ENCODE measurements at regions of chr1 and their contacts with region 1.

Region 1: DNA sequence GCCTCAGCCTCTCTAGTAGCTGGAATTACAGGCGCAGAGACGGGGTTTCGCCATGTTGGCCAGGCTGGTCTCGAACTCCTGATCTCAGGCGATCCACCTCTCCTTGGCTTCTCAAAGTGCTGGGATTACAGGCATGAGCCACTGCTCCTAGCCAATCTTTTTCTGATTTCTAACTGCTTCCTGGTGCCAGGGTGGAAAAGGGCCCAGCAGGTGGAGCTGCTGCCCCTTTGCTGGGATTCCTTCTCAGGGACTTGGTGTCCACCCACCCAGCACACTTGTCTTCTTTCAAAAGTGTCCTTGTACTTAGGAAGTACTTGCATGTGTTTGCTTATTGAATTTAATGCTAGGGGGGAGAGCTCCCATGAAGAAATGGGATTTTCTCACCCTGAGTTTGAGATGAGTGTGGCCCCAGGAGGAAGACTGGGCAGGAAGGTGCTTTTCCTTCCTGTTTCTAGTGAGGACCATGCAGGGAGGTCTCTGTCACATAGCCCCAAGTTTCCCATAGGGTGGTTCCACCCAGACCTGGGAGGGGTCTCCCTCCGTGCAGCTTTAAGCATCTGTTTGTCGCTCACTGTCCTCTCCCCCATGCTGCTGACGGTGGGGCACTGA is 14.2 kb downstream of the UTP11 start:
- DNase-seq: peak; percentile 61
- CTCF ChIP-seq: peak; percentile 71

Region 2: DNA sequence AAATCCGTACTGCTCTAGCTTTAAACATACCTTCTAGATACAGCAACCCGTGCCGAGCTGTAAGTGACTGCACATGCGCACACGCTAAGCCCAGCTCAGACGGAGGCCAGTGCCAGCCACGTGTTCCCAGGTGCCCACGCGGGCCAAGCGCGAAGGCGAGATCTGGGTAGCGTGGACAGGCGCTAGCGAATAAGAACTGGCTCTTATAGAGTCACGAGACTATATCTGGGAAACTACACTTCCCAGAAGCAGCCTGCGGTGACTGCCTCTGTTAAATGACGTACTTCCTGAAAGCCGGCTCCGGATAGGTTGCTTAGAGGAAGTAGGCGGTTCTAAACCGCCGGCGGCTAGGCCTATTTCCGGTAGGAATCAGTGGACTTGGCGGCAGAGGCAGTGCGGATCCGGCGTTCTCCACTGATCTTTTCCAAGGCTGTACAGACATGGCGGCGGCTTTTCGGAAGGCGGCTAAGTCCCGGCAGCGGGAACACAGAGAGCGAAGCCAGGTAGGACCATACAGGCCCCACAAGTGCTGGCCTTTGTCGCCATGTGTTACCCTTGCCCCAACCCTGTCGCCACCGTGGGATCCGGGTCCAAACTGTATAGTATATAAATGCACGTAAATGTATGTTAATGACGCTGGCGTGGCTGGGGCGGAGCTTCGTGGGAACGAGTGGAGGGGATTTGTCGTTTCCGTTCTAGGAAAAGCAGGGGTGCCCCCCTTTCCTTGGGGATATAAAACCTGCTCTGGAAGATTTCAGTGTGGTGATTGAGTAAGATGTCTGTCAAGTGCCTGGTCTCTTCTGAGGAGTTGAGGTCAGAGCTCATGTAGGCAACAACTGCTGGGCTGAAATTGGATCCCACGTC is 14.1 kb before region 1 on chr1 and contains the start of gene UTP11:
- CTCF ChIA-PET with region 1: interaction called, 58 read pairs
- POLR2A ChIA-PET with region 1: interaction called, 7 read pairs
- DNase-seq: peak; percentile 95
- CTCF ChIP-seq: no peak

Region 3: GRCh38 chr1:38037221-38037939 is 10.7 kb after region 1 on chr1:
- CTCF ChIA-PET with region 1: interaction called, 27 read pairs
- POLR2A ChIA-PET with region 1: no interaction called
- DNase-seq: no peak
- CTCF ChIP-seq: peak; percentile 29

Region 4: DNA sequence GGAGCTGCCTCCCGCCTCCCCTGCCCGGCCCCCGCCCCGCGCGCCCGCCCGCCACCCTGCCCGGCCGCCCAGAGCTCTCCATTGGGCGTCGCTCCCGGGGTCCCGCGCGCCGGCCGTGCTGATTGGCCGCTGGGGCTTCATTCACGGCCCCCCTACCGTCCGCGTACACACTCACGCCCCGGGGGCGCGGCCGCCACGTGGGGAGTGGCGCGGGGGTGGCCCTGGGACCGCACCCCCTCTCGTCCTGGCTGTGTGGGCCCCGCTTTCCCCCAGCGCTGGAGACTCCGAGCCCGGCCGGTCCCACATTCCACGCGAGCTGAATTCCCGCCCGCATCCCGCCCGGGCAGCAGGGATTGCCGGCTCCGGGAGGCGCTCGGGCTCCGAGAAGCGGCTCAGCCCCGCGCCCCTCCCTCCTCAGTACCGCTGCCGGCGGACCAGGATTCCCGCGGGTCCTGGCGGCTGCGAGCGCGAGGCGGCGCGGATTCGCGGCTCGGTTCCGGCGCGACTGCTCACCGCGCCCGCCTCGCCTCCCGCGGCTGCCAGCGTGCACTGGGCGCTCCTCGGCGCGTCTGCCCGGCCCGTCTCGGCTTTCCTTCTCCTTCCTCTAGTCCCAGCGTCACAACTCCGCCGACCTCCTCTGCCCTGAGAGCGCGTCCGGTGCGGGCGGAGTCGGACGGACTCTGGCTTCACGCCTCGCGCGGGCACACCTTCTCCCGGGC is 20.3 kb after region 1 on chr1:
- CTCF ChIA-PET with region 1: interaction called, 27 read pairs
- POLR2A ChIA-PET with region 1: interaction called, 5 read pairs
- DNase-seq: peak; percentile 89
- CTCF ChIP-seq: no peak

Region 5: GRCh38 chr1:38071312-38072256 is 44.9 kb after region 1 on chr1:
- CTCF ChIA-PET with region 1: interaction called, 35 read pairs
- POLR2A ChIA-PET with region 1: no interaction called
- DNase-seq: peak; percentile 66
- CTCF ChIP-seq: peak; percentile 40

Region 6: DNA sequence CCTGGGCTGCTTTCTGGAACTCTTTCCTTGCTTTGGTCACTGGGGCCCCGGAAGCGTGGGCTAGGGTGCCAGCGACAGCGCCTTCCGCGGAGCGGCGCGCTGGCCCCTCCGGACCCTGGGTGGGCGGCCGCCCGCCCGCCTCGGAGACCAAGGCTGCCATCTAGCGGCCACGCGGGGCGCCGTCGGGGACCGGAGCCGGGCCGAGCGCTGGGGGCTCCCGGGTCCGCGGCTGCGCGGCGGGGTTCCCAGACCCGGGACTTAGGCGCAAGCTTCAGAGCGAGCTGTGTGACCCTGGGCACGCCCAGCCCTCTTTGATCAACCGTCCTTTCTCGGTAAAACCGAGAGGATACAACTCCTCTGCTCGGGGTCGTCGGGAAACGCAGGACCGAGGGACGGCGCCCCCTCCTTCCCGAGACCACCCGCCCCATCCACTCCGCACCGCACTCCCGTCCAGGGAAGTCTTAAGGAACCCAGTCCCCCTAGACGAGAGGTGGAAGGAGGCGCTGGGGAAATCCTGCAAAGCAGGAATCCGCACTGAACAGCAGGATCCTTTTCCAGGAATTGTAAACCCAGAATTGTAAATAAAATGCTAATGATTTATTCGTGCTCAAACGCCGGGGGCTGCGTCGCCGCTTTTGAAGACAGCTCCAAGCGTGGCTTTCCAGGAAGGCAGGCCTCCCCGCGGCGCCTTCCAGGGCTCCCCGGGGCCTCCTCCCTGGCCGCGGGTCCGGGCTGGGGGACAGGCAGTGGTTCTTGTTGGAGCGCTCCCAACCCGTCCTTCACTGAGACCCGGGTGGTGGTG is 791.7 kb after region 1 on chr1:
- CTCF ChIA-PET with region 1: interaction called, 13 read pairs
- POLR2A ChIA-PET with region 1: no interaction called
- DNase-seq: peak; percentile 79
- CTCF ChIP-seq: peak; percentile 84

Region 7: DNA sequence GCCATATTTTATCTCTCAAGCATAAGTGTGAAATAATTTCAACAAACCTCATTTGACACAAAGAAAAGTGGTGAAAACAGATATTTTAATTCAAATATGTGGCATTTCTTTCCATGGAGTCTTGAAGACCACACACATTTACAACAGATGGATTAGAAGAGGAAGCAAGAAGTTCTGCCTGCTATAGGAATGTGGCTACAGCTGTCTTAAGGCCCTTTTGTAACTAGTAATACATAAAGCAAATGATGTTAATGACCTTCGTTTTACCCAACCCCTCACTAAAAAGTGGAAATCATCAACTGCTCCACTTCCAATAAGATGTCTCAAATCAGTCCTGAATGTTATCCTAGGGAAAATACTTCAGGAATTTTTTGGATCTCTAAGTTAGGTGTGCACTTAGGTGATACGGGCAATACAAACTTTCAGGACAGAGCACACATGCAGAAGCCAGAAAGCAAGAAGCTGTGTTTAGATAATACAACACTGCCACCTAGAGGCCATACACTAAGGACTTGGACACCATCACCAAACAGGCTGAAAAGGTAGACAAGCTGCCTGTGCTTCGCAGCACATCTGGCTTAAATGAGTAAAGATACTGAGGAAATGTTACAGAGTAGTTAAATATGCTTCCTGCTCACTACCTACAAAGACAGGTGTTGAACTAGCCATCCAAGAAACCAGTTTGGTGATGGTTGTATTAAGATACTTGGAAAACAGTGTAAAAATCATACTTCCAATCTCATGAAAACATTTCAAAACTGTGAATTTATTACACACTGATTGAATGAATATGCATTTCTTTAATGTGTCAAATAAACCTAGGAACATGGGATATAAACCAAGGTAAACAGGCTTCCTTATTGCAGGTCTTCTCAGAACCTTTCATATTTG is 808.5 kb after region 1 on chr1:
- CTCF ChIA-PET with region 1: interaction called, 10 read pairs
- POLR2A ChIA-PET with region 1: no interaction called
- DNase-seq: peak; percentile 67
- CTCF ChIP-seq: peak; percentile 78